ENCODE measurements at regions of chr3 and their contacts with region 1.

Region 1: GRCh38 chr3:101827211-101828174 is 21.8 kb upstream of the NFKBIZ start:
- DNase-seq: peak; percentile 94
- ATAC-seq: peak; percentile 86
- H3K4me3 Mint-ChIP-seq: peak overlapping the region; percentile 77
- H3K27ac Mint-ChIP-seq: peak overlapping the region; percentile 96
- H3K4me1 Mint-ChIP-seq: peaks cover 60% of the 10 kb centered on the region
- H3K27me3 Mint-ChIP-seq: no peaks in the 10 kb centered on the region

Region 2: GRCh38 chr3:101809178-101810021 is 18.1 kb before region 1 on chr3:
- CTCF ChIA-PET with region 1: interaction called, 37 read pairs
- POLR2A ChIA-PET with region 1: interaction called, 7 read pairs
- intact Hi-C with region 1: no loop called
- DNase-seq: peak; percentile 45
- ATAC-seq: peak; percentile 53
- H3K4me3 Mint-ChIP-seq: no peak overlapping the region
- H3K27ac Mint-ChIP-seq: peak overlapping the region; percentile 53
- H3K4me1 Mint-ChIP-seq: peaks cover 48% of the 10 kb centered on the region
- H3K27me3 Mint-ChIP-seq: no peaks in the 10 kb centered on the region

Region 3: DNA sequence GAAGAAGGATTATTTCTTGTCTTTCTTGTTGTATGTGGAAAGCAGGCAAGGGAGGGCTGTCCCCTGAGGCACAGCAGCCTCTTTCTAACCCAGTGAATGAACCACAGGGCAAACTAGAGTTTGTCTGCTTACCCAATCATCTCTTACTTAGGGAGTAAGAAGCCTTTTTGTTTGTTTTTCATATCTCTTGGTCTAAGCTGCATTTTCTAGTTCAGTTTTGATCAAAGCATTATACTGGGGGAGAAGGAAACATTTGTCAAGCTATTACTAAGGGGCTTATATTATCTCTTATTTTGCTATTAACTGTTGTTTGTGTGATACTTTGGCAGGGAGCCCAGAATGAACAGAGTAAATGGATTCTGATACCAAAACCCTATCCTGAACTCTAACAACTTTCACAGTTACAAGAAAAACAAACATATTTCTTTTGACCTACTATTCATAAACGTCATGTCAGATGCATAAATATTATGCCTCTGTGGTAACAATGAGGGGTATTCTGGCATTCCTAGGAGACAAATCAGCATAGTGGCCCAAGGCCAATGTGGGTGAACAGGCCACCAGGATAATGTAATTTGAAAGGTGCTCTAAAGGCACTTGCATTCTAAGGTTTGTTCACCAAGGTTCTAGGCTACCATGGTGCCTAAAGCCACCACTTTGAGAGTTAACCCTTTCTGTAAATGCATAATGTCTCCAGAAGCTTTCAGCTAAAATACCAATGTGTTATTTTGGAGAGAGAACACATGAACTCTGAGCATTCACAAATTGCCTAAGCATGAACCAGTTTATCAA is 335.7 kb after region 1 on chr3:
- CTCF ChIA-PET with region 1: interaction called, 3 read pairs
- POLR2A ChIA-PET with region 1: no interaction called
- intact Hi-C with region 1: loop called in 1 of 2 experiments (anchors 5 kb)
- DNase-seq: no peak
- ATAC-seq: peak; percentile 22
- H3K4me3 Mint-ChIP-seq: no peak overlapping the region
- H3K27ac Mint-ChIP-seq: peak overlapping the region; percentile 15
- H3K4me1 Mint-ChIP-seq: peaks cover 23% of the 10 kb centered on the region
- H3K27me3 Mint-ChIP-seq: no peaks in the 10 kb centered on the region